ENCODE measurements at regions of chr16 and their contacts with region 1.

Region 1: GRCh38 chr16:69924777-69925191 is 26.4 kb upstream of the CLEC18A start:
- DNase-seq: peak; percentile 79 to 87 (median 81)
- H3K4me3 ChIP-seq: peak overlapping the region; percentile 29
- H3K27ac ChIP-seq: peak overlapping the region; percentile 87 to 90
- H3K4me1 ChIP-seq: peaks cover 11% of the 10 kb centered on the region
- H3K27me3 ChIP-seq: no peaks in the 10 kb centered on the region
- CTCF ChIP-seq: no peak
- EP300 ChIP-seq: no peak
- POLR2A ChIP-seq: peak; percentile 49

Region 2: DNA sequence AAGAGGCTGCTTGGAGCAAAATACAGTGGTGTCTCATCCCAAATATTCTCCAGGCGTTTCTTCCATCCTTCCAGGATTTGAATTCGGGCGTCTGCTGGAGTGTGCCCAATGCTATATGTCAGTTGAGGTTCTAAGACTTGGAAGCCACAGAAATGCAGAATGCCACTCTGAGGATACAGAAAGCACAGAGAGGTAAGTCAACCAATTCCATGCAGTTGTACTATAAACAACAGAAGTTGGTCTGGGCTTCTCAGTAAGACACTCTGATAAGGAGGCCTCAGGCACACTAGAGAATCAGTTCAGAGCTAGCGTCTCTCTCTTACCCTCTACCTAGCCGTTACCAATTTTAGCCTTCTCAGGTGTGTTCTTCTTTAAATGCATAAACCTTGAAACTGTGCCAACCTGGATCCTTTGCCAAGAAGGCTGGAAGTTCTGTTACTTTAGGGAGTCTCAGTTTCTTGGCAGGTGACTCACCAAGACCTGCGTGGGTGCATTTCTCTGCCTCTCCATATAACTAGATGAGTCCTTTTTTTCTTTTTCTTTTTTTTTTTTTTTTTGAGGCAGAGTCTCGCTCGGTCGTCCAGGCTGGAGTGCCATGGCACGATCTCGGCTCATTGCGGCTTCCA is 213.6 kb before region 1 on chr16:
- intact Hi-C with region 1: no loop called
- DNase-seq: peak; percentile 43 to 71 (median 52)
- H3K4me3 ChIP-seq: no peak overlapping the region
- H3K27ac ChIP-seq: peak overlapping the region; percentile 13 to 27
- H3K4me1 ChIP-seq: no peaks in the 10 kb centered on the region
- H3K27me3 ChIP-seq: no peaks in the 10 kb centered on the region
- CTCF ChIP-seq: no peak
- EP300 ChIP-seq: no peak
- POLR2A ChIP-seq: no peak

Region 3: GRCh38 chr16:69823831-69824563 is 100.8 kb before region 1 on chr16:
- intact Hi-C with region 1: no loop called
- DNase-seq: peak; percentile 85 to 89 (median 87)
- H3K4me3 ChIP-seq: no peak overlapping the region
- H3K27ac ChIP-seq: peak overlapping the region; percentile 53 to 87
- H3K4me1 ChIP-seq: peaks cover 7% of the 10 kb centered on the region
- H3K27me3 ChIP-seq: no peaks in the 10 kb centered on the region
- CTCF ChIP-seq: no peak
- EP300 ChIP-seq: no peak
- POLR2A ChIP-seq: no peak

Region 4: GRCh38 chr16:69848637-69849545 is 75.9 kb before region 1 on chr16:
- intact Hi-C with region 1: loop called in 1 of 4 experiments (anchors 5 kb)
- DNase-seq: peak; percentile 82 to 86 (median 83)
- H3K4me3 ChIP-seq: no peak overlapping the region
- H3K27ac ChIP-seq: peak overlapping the region in 1 of 2 donors; percentile 40
- H3K4me1 ChIP-seq: peaks cover 7% of the 10 kb centered on the region
- H3K27me3 ChIP-seq: no peaks in the 10 kb centered on the region
- CTCF ChIP-seq: no peak
- EP300 ChIP-seq: no peak
- POLR2A ChIP-seq: no peak

Region 5: DNA sequence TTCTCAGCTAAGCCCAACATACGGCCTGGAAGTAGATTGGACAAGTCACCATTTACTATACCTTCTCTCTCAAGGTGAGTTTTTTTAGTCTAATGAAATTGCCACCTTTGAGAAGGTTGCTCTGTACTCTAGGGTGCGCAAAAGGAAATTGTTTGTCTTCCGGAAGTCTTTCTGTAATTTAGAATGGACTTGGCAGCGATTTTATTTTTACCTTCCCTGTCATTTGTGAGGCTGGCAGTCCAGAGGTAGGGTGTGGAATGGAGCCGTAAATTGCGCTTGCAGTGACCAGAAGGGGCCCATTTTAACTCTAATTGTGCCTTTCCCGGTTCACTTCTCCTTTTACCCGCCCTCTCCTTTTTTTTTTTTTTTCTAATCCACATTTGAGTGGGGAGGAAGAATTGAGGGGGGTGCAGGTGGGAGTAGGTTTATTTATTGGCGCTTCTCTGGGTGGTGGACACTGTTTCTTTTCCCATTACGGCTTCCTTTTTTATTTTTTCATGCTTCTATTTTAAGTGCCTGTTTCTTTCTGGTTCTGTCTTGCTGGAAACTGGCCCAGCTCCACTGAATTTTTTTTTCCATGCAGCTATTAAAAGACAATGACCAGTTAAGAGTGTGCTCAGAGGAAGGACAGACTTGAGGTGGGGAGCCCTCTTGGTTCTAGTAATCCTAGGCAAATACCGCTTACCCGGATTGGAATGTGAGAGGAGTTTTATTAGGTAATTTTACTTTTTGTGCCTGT is 63.3 kb before region 1 on chr16:
- intact Hi-C with region 1: loop called in 1 of 4 experiments (anchors 10 kb)
- DNase-seq: peak in 4 of 5 donors; percentile 57 to 76 (median 72)
- H3K4me3 ChIP-seq: peak overlapping the region; percentile 6
- H3K27ac ChIP-seq: peak overlapping the region in 1 of 2 donors; percentile 48
- H3K4me1 ChIP-seq: peaks cover 14% of the 10 kb centered on the region
- H3K27me3 ChIP-seq: no peaks in the 10 kb centered on the region
- CTCF ChIP-seq: no peak
- EP300 ChIP-seq: no peak
- POLR2A ChIP-seq: no peak

Region 6: GRCh38 chr16:71303938-71304337 is 1379.2 kb after region 1 on chr16:
- intact Hi-C with region 1: no loop called
- DNase-seq: no peak
- H3K4me3 ChIP-seq: no peak overlapping the region
- H3K27ac ChIP-seq: no peak overlapping the region
- H3K4me1 ChIP-seq: no peaks in the 10 kb centered on the region
- H3K27me3 ChIP-seq: no peaks in the 10 kb centered on the region
- CTCF ChIP-seq: no peak
- EP300 ChIP-seq: no peak
- POLR2A ChIP-seq: no peak